OCI-LY7 (cell line): ENCODE measurements at regions of chr13 and their contacts with region 1.

Region 1: DNA sequence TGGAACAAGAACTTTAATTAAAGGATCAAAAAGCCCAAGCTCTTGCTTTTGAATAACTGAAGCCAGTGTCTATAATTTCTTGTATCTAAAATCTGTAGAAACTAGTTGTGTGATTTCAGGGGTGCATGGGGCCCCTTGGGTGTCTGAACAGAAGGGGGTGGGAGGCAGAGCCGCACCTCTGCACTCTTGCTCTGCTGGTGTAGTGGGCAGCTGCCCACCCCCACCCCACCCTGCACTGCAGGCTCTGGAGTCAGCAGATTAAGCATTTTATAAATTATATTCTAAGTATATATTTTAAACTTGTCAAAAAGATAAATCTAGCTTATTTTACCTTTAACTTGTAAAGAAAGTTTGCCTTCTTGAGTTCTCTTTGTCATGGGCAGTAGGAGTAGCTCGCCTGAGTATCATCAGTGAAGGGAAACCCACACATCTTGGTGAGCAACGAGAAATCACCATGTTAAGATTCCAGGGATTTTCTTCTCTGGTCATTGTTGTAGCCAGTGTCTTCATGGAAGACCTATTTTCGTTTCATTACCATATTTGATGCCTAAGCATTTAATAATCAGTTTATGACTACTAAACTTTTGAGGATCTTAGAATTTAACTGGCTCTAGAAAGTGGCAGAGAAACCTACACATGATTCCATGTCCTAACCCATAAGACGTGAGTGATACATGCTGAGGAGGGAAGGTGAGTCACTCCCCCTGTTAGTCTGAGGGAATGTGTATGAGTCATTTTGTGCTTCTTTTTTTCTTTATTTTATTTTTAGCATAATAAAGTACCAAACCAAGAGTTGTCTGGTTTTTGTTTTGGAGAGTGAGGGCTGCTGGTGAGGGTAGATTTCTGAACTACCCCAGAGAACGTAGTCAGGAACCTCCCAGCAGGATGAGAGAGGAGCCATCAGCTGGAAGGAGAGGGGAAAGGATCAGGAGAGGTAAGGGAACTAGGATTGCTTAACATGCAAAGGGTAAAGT is 7.7 kb downstream of the UBE2L5 start:
- DNase-seq: no peak
- H3K4me3 ChIP-seq: peak overlapping the region; percentile 57
- H3K27ac ChIP-seq: peak overlapping the region; percentile 83
- H3K4me1 ChIP-seq: peaks cover 67% of the 10 kb centered on the region
- CTCF ChIP-seq: no peak

Region 2: GRCh38 chr13:30453727-30454126 is 23.7 kb after region 1 on chr13:
- CTCF ChIA-PET with region 1: no interaction called
- POLR2A ChIA-PET with region 1: interaction called, 235 read pairs
- intact Hi-C with region 1: no loop called
- DNase-seq: peak; percentile 60
- H3K4me3 ChIP-seq: no peak overlapping the region
- H3K27ac ChIP-seq: peak overlapping the region; percentile 30
- H3K4me1 ChIP-seq: peaks cover 67% of the 10 kb centered on the region
- CTCF ChIP-seq: peak; percentile 67

Region 3: DNA sequence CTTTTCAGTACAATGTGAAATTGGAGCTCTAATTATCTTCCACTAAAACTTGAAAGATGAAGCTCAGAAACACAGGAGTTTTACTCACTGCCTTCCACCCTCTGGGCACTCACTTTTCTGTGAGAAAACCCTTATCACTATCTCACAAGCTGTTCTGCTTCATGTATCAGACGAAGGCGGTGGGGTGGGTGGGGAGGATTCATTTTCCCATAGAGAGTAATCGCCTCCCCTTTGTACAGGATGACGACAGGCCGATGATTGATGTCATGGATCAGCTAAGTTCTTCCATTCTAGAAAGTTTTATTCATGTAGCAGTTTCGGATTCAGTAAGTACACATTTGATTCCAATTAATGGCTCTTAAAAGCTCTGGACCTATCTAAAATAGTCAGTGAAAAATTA is 1745.3 kb after region 1 on chr13:
- CTCF ChIA-PET with region 1: no interaction called
- POLR2A ChIA-PET with region 1: no interaction called
- intact Hi-C with region 1: no loop called
- DNase-seq: no peak
- H3K4me3 ChIP-seq: no peak overlapping the region
- H3K27ac ChIP-seq: no peak overlapping the region
- H3K4me1 ChIP-seq: no peaks in the 10 kb centered on the region
- CTCF ChIP-seq: no peak